Stomach (tissue), 19 donors: ENCODE measurements at regions of chr1 and their contacts with region 1.

Region 1: GRCh38 chr1:30719406-30720270 is 3.7 kb downstream of the MATN1 start:
- DNase-seq: no peak
- H3K4me3 ChIP-seq: peak overlapping the region; percentile 35 to 59 (median 58)
- H3K27ac ChIP-seq: peak overlapping the region in 4 of 5 donors; percentile 97 to 100 (median 100)
- H3K4me1 ChIP-seq: peaks cover 12 to 35% (median 14%) of the 10 kb centered on the region in 4 donors
- H3K27me3 ChIP-seq: no peaks in the 10 kb centered on the region
- CTCF ChIP-seq: peak in 1 of 7 experiments; percentile 23
- EP300 ChIP-seq: no peak
- POLR2A ChIP-seq: no peak

Region 2: GRCh38 chr1:30779294-30780071 is 59.8 kb after region 1 on chr1:
- intact Hi-C with region 1: loop called (anchors 2 kb)
- DNase-seq: peak; percentile 89 to 90
- H3K4me3 ChIP-seq: no peak overlapping the region
- H3K27ac ChIP-seq: no peak overlapping the region
- H3K4me1 ChIP-seq: peaks cover 4 to 20% (median 9%) of the 10 kb centered on the region in 4 donors
- H3K27me3 ChIP-seq: peaks cover 0 to 10% (median 0%) of the 10 kb centered on the region in 3 donors
- CTCF ChIP-seq: peak in 6 of 7 experiments; percentile 89 to 99 (median 96)
- EP300 ChIP-seq: no peak
- POLR2A ChIP-seq: no peak